Activated CD8-positive, alpha-beta T cell treated with anti-CD3 and anti-CD28 coated beads for 36 hours (primary cell): ENCODE measurements at regions of chr18 and their contacts with region 1.

Region 1: GRCh38 chr18:32552421-32553030 is 81.8 kb upstream of the GAREM1 start:
- DNase-seq: peak; percentile 72
- ATAC-seq: peak; percentile 87
- H3K4me3 Mint-ChIP-seq: no peak overlapping the region
- H3K27ac Mint-ChIP-seq: no peak overlapping the region
- H3K4me1 Mint-ChIP-seq: no peaks in the 10 kb centered on the region
- H3K27me3 Mint-ChIP-seq: peaks cover 11% of the 10 kb centered on the region
- CTCF ChIP-seq: peak; percentile 69

Region 2: DNA sequence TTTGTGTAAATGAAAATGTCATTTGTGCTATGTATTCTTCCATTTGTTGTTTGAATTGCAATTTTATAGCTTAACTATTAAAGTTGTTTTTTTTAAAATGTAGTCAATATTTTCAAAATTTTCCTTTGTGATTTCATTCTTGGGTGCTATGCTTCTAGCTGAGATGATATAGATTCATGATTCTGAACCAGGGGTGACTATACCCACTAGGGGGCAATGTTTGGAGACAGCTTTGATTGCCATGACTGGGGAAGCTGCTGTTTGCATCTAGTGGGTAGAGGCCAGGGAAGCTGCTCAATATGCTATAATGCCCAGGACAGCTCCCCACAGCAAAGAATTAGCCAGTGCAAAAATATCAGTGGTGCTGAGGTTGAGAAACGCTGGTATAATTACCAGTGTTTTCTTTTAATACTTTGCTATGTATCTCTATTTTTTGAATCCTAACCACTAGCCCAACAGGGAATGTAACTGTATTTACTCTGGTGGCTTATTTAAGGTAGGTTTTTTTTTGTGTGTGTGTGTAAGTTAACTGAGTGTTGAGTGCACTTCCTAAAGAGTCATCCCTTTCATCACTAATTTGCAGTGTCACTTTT is 262.9 kb before region 1 on chr18:
- CTCF ChIA-PET with region 1: interaction called, 12 read pairs
- POLR2A ChIA-PET with region 1: no interaction called
- intact Hi-C with region 1: loop called (anchors 5 kb)
- DNase-seq: peak; percentile 47
- ATAC-seq: no peak
- H3K4me3 Mint-ChIP-seq: no peak overlapping the region
- H3K27ac Mint-ChIP-seq: no peak overlapping the region
- H3K4me1 Mint-ChIP-seq: no peaks in the 10 kb centered on the region
- H3K27me3 Mint-ChIP-seq: peaks cover 4% of the 10 kb centered on the region
- CTCF ChIP-seq: peak; percentile 46

Region 3: GRCh38 chr18:32509111-32509510 is 43.4 kb before region 1 on chr18:
- CTCF ChIA-PET with region 1: no interaction called
- POLR2A ChIA-PET with region 1: no interaction called
- intact Hi-C with region 1: no loop called
- DNase-seq: no peak
- ATAC-seq: no peak
- H3K4me3 Mint-ChIP-seq: no peak overlapping the region
- H3K27ac Mint-ChIP-seq: no peak overlapping the region
- H3K4me1 Mint-ChIP-seq: peaks cover 3% of the 10 kb centered on the region
- H3K27me3 Mint-ChIP-seq: peaks cover 9% of the 10 kb centered on the region
- CTCF ChIP-seq: no peak

Region 4: DNA sequence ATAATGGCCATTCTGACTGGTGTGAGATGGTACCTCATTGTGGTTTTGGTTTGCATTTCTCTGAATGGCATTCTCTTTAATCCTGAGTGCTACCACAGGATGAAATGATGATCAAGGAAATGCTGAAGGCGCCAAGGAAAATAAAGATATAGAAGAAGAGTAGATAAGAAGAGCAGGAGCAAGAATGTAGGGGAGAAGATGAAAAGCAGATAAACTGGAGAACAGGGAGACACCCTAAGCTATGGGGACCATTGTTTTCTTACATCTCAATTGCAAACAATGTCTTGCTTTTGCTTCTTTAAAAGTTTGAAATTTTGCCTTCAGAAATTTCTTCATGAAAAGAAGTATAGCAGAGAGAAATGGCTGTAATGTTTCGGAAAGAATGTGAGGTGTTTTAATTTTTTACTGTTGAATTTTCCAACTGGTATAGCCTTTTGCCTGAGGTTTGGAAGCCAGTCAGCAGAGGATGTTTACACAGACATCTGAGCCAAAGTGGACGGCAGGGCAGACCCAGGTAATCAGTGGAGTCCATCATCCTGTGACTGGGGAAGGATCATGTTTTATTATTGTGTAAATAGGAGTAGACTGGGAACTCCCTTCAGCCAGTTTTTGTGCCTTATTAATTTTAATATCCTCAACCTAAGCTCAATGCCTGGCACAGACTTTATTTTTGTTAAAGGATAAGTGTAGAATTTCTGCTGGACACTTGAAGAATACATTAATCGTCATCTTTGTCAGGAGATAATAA is 59.9 kb after region 1 on chr18:
- CTCF ChIA-PET with region 1: no interaction called
- POLR2A ChIA-PET with region 1: no interaction called
- intact Hi-C with region 1: no loop called
- DNase-seq: no peak
- ATAC-seq: no peak
- H3K4me3 Mint-ChIP-seq: no peak overlapping the region
- H3K27ac Mint-ChIP-seq: no peak overlapping the region
- H3K4me1 Mint-ChIP-seq: no peaks in the 10 kb centered on the region
- H3K27me3 Mint-ChIP-seq: peaks cover 8% of the 10 kb centered on the region
- CTCF ChIP-seq: no peak